Naive thymus-derived CD8-positive, alpha-beta T cell (primary cell): ENCODE measurements at regions of chr11 and their contacts with region 1.

Region 1: DNA sequence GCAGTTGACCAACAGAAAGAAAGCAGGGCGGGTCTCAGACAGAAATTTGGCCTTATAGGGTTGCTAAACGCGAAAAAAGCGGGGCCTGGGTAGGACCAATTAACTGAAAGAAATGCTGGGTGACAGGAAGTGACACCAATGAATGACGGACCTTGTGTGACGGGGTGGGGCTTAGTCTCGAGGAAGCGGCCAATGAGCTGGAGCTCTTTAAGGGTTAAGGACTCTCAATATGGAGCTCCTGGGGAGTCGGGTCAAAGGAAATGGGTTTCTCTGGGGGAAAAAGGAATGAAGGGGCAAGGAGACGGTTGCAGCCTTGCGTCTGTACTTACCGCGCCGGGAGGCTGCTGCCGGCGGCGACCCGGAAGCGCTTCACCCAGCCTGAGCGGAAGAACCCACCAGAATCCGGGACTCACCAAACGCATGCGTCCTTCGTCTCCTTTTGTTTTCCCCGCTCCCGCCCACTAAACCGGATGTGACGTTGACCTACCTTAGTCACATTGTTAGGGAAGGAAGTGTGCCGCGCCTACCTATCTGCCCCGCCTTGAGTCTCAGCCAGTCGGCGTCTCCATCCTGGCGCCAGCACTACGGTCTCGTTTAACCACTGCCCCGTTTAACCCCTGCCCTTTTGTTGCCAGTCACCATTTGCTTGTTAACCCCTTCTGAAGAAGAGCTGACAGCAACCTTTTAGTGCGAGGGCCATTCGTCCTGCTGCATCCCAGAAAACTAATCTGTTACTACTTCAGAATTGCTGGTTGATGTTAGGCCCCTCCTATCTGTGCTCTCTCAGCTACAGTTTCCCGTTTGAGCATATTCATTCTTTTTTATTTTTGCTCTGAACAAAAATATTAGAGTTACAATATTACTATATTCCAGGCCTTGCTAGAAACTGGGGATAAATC is at the start of gene ANAPC15:
- DNase-seq: peak; percentile 79 to 100 (median 99)
- ATAC-seq: peak; percentile 88 to 90
- H3K4me3 Mint-ChIP-seq: peak within 1 kb of the TSS; percentile 87 to 100 (median 96)
- H3K27ac Mint-ChIP-seq: peak within 1 kb of the TSS; percentile 95 to 99 (median 98)
- H3K4me1 Mint-ChIP-seq: peaks cover 22 to 28% (median 25%) of the 10 kb centered on the region in 4 donors
- H3K27me3 Mint-ChIP-seq: peaks cover 0 to 8% (median 4%) of the 10 kb centered on the region in 5 donors
- polyA plus RNA-seq, gene ANAPC15: 81.7 to 102 (median 90.1) TPM

Region 2: DNA sequence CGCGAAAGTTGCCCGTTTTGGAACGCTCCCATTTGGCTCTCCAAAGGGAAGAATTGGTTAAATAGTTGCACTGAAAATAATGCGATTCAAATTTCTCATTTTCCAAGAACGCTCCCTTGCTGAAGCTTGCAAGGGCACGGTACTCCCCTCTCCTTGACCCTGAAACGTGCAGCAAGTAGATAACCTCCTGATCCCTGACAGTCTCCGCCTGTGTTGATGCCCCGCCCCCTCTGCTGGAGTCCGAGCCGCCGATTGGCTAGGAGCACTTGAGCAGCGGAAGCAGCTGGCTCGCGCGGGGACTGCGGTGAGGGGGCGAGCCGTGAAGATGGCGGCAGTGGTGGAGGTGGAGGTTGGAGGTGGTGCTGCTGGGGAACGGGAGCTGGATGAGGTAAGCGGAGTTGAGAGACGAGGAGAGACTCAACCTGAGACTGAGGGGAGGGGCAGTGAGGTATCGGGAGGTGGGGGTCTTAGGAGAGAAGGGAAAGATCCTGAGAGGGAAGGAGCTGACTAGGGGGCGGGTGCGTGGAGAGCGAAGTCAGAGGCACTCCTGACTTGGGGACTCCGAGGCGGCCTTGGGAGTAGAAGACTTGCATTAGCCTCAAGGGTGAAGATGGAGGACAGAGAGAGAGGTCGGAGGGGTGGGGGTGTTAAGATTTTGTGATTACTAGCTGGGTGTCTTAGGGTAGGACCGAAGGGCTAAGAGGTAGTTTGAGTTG is 183.7 kb before region 1 on chr11 and contains the start of gene RNF121:
- POLR2A ChIA-PET with region 1: interaction called, 14 read pairs
- DNase-seq: peak; percentile 94 to 99 (median 97)
- ATAC-seq: peak; percentile 90 to 92
- H3K4me3 Mint-ChIP-seq: peak within 1 kb of the TSS; percentile 94 to 99 (median 98)
- H3K27ac Mint-ChIP-seq: peak within 1 kb of the TSS; percentile 97 to 100 (median 99)
- H3K4me1 Mint-ChIP-seq: peaks cover 25 to 57% (median 55%) of the 10 kb centered on the region in 4 donors
- H3K27me3 Mint-ChIP-seq: no peaks in the 10 kb centered on the region
- polyA plus RNA-seq, gene RNF121: 5.7 to 9.4 (median 7.7) TPM